Breast epithelium (tissue), 4 donors: ENCODE measurements at regions of chr19 and their contacts with region 1.

Region 1: GRCh38 chr19:42450314-42450934 is 7.7 kb upstream of the CXCL17 start:
- DNase-seq: peak; percentile 85 to 88
- H3K4me3 ChIP-seq: no peak overlapping the region
- H3K27ac ChIP-seq: peak overlapping the region; percentile 76 to 87
- H3K4me1 ChIP-seq: peaks cover 5 to 8% of the 10 kb centered on the region in 2 donors
- H3K27me3 ChIP-seq: no peaks in the 10 kb centered on the region
- CTCF ChIP-seq: peak; percentile 71 to 98 (median 93)
- POLR2A ChIP-seq: no peak

Region 2: GRCh38 chr19:42412227-42412626 is 38.2 kb before region 1 on chr19:
- intact Hi-C with region 1: no loop called
- DNase-seq: no peak
- H3K4me3 ChIP-seq: peak overlapping the region in 2 of 3 donors; percentile 15 to 40
- H3K27ac ChIP-seq: peak overlapping the region in 1 of 2 donors; percentile 61
- H3K4me1 ChIP-seq: peaks cover 0 to 3% of the 10 kb centered on the region in 2 donors
- H3K27me3 ChIP-seq: no peaks in the 10 kb centered on the region
- CTCF ChIP-seq: no peak
- POLR2A ChIP-seq: no peak

Region 3: GRCh38 chr19:42487032-42487797 is 36.8 kb after region 1 on chr19:
- intact Hi-C with region 1: no loop called
- DNase-seq: no peak
- H3K4me3 ChIP-seq: no peak overlapping the region
- H3K27ac ChIP-seq: peak overlapping the region in 1 of 2 donors; percentile 21
- H3K4me1 ChIP-seq: peaks cover 0 to 5% of the 10 kb centered on the region in 2 donors
- H3K27me3 ChIP-seq: no peaks in the 10 kb centered on the region
- CTCF ChIP-seq: no peak
- POLR2A ChIP-seq: no peak

Region 4: GRCh38 chr19:42529248-42529764 is 78.9 kb after region 1 on chr19:
- intact Hi-C with region 1: loop called (anchors 10 kb)
- DNase-seq: peak; percentile 63 to 71
- H3K4me3 ChIP-seq: peak overlapping the region in 2 of 3 donors; percentile 47 to 67
- H3K27ac ChIP-seq: peak overlapping the region; percentile 69 to 92
- H3K4me1 ChIP-seq: peaks cover 0 to 6% of the 10 kb centered on the region in 2 donors
- H3K27me3 ChIP-seq: no peaks in the 10 kb centered on the region
- CTCF ChIP-seq: peak; percentile 74 to 97 (median 81)
- POLR2A ChIP-seq: no peak